Dorsolateral prefrontal cortex (tissue), 120 donors: ENCODE measurements at regions of chr16 and their contacts with region 1.

Region 1: GRCh38 chr16:67719048-67719777 is at the start of gene GFOD2:
- DNase-seq: peak; percentile 92 to 98 (median 95)
- H3K4me3 ChIP-seq: peak within 1 kb of the TSS; percentile 63 to 99 (median 93)
- H3K27ac ChIP-seq: peak within 1 kb of the TSS; percentile 2 to 96 (median 88)
- H3K27me3 ChIP-seq: no peaks in the 10 kb centered on the region
- CTCF ChIP-seq: peak in 39 of 56 donors; percentile 0 to 57 (median 33)
- total RNA-seq, gene GFOD2: 13.3 to 49.7 (median 34.9) TPM

Region 2: DNA sequence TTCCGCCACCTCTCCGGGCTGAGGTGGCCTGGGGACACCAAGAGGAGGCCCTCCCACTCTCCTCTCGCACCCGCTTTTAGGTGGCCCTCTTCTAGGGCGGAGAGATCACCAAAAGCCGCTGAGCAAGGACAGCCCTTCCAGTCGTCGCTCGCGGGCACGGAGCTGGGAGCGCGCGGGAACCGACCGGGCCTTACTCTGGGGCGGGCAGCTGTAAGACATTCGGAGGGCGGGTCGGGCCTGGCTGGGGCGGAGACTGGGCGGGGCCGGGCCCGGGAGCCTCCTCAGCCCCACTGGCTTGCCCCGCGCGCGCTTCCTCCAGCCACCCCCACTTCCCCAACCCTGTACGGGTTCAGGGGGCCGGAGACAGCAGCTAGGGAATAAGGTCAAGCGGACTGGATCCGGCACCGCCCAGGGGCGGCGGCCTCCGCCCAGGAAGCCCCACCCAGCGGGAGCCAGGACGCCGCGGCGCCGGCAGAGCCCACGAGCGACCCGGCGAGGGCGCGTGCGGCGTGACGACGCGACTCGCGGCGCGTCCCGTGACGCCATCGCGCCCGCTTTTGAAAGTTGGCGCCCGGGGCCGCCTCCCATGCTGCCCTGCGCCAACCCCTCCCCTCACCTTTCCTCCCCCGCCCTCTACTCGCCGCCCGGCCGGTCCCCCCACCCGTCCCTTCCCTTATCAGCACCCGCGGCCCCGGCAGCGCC is 157.2 kb before region 1 on chr16:
- intact Hi-C with region 1: loop called (anchors 2 kb)
- DNase-seq: peak; percentile 79 to 93 (median 88)
- H3K4me3 ChIP-seq: peak overlapping the region; percentile 40 to 100 (median 92)
- H3K27ac ChIP-seq: peak overlapping the region; percentile 31 to 100 (median 99)
- H3K27me3 ChIP-seq: no peaks in the 10 kb centered on the region
- CTCF ChIP-seq: peak in 21 of 56 donors; percentile 6 to 46 (median 23)

Region 3: GRCh38 chr16:67660564-67661028 is 58.6 kb before region 1 on chr16 and contains the start of gene PARD6A:
- intact Hi-C with region 1: loop called (anchors 5 kb)
- DNase-seq: peak; percentile 90 to 98 (median 98)
- H3K4me3 ChIP-seq: peak within 1 kb of the TSS; percentile 57 to 100 (median 92)
- H3K27ac ChIP-seq: peak within 1 kb of the TSS; percentile 82 to 99 (median 97)
- H3K27me3 ChIP-seq: no peaks in the 10 kb centered on the region
- CTCF ChIP-seq: peak in 13 of 56 donors; percentile 2 to 29 (median 8)
- total RNA-seq, gene PARD6A: 13.9 to 52.7 (median 27.3) TPM

Region 4: GRCh38 chr16:67800338-67800926 is 81.2 kb after region 1 on chr16:
- intact Hi-C with region 1: loop called (anchors 5 kb)
- DNase-seq: no peak
- H3K4me3 ChIP-seq: no peak overlapping the region
- H3K27ac ChIP-seq: peak overlapping the region in 1 of 59 donors; percentile 27
- H3K27me3 ChIP-seq: no peaks in the 10 kb centered on the region
- CTCF ChIP-seq: no peak

Region 5: DNA sequence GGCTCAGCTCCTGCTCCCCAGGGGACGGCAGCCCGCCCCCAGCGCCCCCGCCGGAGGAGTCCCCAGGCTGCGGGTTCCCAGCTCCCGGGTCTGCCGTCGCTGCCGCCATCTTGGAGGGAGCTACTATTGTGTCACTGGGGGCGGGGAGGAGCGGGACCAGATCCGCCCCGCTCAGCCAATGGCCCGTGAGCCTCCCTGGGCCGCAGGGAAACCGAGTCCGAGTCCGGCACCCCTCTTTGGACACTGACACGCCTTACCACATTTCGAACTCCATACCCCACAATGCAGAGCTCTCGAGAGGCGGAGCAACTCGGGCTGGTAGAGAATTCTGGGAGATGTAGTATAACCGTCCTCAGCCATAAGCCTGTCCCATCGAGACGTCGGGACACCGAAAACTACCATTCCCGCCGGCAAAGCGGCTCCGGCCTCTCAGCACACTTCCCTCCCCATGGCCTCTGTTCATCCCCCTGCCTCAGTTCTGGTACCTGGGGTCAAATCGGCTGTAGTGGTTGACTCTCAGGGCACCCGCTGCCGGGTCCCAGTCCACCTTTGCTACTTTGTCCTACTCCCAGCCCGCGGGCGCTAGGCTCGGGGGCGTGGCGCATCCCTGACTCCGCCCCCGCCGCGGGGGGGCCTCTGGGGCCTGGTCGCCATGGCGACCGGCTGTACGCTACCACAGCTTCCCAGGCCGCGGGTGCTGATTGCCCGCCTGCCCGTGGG is 87.4 kb after region 1 on chr16 and contains the starts of genes RANBP10 and TSNAXIP1:
- intact Hi-C with region 1: loop called (anchors 5 kb)
- DNase-seq: peak; percentile 91 to 99 (median 98)
- H3K4me3 ChIP-seq: peak within 1 kb of the TSS; percentile 62 to 100 (median 93)
- H3K27ac ChIP-seq: peak within 1 kb of the TSS in 57 of 59 donors; percentile 3 to 93 (median 80)
- H3K27me3 ChIP-seq: no peaks in the 10 kb centered on the region
- CTCF ChIP-seq: peak in 35 of 56 donors; percentile 2 to 66 (median 24)
- total RNA-seq, gene RANBP10: 13.9 to 32.6 (median 21.2) TPM
- total RNA-seq, gene TSNAXIP1: 3.1 to 16.5 (median 8.5) TPM